AG04450 (cell line): ENCODE measurements at regions of chr9 and their contacts with region 1.

Region 1: GRCh38 chr9:19464764-19465585 is 56.2 kb downstream of the ACER2 start:
- DNase-seq: peak; percentile 61
- H3K4me3 ChIP-seq: peak overlapping the region; percentile 49
- H3K27ac ChIP-seq: no peak overlapping the region
- H3K27me3 ChIP-seq: peaks cover 4% of the 10 kb centered on the region
- CTCF ChIP-seq: peak; percentile 60

Region 2: DNA sequence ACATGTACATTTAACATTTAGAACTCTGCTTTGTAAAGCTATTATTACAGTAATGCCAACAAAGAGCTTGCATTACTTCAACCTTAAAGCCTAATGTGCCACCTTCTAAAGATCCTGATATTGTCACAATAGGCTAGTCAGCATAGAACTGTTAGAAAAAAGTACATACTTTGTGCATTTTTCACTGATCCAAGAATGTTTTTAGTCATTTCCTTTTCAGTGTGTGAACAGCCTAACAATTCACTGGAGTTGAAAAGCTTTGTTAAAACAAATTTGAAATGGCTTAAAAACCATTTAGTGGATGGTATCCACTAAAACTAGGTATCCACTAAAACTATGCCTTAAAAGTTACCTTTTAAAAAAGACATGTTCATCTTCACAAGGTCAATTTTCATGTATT is 89.4 kb before region 1 on chr9:
- CTCF ChIA-PET with region 1: interaction called, 16 read pairs
- POLR2A ChIA-PET with region 1: interaction called, 3 read pairs
- DNase-seq: no peak
- H3K4me3 ChIP-seq: no peak overlapping the region
- H3K27ac ChIP-seq: no peak overlapping the region
- H3K27me3 ChIP-seq: no peaks in the 10 kb centered on the region
- CTCF ChIP-seq: no peak

Region 3: DNA sequence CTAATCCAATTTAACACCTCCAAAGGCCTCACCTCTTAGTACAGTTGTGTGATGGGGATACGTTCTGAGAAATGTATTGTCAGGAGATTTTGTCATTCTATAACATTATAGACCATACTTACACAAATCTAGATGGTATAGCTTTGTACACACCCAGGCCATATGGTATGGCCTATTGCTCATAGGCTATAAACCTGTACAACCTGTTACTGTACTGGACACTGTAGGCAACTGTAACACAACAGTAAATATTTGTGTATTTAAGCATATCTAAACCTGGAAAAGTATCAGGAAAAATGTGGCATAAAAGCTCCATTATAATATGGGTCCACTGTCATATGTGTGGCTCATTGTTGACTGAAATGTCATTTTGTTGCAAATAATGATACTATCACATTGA is 44.1 kb before region 1 on chr9:
- CTCF ChIA-PET with region 1: interaction called, 10 read pairs
- POLR2A ChIA-PET with region 1: no interaction called
- DNase-seq: no peak
- H3K4me3 ChIP-seq: no peak overlapping the region
- H3K27ac ChIP-seq: no peak overlapping the region
- H3K27me3 ChIP-seq: no peaks in the 10 kb centered on the region
- CTCF ChIP-seq: no peak

Region 4: GRCh38 chr9:19441730-19442129 is 23.2 kb before region 1 on chr9:
- CTCF ChIA-PET with region 1: interaction called, 20 read pairs
- POLR2A ChIA-PET with region 1: no interaction called
- DNase-seq: no peak
- H3K4me3 ChIP-seq: no peak overlapping the region
- H3K27ac ChIP-seq: no peak overlapping the region
- H3K27me3 ChIP-seq: no peaks in the 10 kb centered on the region
- CTCF ChIP-seq: no peak

Region 5: GRCh38 chr9:19517202-19517942 is 52.4 kb after region 1 on chr9:
- CTCF ChIA-PET with region 1: no interaction called
- POLR2A ChIA-PET with region 1: no interaction called
- DNase-seq: no peak
- H3K4me3 ChIP-seq: no peak overlapping the region
- H3K27ac ChIP-seq: no peak overlapping the region
- H3K27me3 ChIP-seq: no peaks in the 10 kb centered on the region
- CTCF ChIP-seq: peak; percentile 25; the same call in 1 of the 2 replicates

Region 6: DNA sequence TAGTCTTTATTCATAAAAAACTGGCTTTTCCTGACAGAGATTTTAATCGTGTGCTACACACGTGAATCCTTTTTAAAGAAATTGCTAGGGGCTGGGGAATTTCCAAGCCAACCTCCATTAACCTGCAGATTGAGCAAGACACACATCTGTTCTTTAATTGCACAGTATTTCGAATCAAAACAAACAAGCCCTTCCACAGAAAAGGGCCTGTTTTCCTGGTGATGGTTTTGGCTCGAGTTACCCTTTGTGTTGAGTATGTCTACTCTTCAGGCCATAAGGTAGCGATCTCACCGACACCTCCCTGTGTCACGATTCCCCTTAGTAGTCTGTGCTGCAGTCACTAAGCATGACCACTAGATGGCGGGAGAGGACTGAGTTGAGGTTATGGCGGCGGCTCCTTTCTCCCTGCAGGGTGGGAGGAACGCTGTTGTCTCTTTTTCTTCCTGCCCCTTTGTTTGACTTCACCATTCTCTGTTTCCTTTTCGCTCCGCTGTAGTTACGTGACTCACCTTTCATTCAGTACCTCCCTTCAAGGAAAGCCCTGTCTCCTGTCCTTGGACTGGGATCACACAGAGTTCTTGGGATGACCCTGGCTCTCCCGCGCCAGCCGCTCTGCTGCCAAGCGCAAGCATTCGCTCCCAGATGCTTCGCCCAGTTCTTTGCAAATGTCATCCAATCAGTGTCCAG is 461.0 kb after region 1 on chr9:
- CTCF ChIA-PET with region 1: interaction called, 33 read pairs
- POLR2A ChIA-PET with region 1: no interaction called
- DNase-seq: peak; percentile 55
- H3K4me3 ChIP-seq: peak overlapping the region; percentile 65
- H3K27ac ChIP-seq: no peak overlapping the region
- H3K27me3 ChIP-seq: no peaks in the 10 kb centered on the region
- CTCF ChIP-seq: peak; percentile 98